ENCODE measurements at regions of chr15 and their contacts with region 1.

Region 1: GRCh38 chr15:32870240-32871033 is 152.6 kb downstream of the GREM1 start:
- DNase-seq: peak; percentile 11
- ATAC-seq: no peak
- H3K4me3 Mint-ChIP-seq: no peak overlapping the region
- H3K27ac Mint-ChIP-seq: no peak overlapping the region
- H3K4me1 Mint-ChIP-seq: no peaks in the 10 kb centered on the region
- H3K27me3 Mint-ChIP-seq: peaks cover 2% of the 10 kb centered on the region

Region 2: GRCh38 chr15:32838820-32839219 is 31.6 kb before region 1 on chr15:
- CTCF ChIA-PET with region 1: interaction called, 4 read pairs
- POLR2A ChIA-PET with region 1: interaction called, 13 read pairs
- intact Hi-C with region 1: no loop called
- DNase-seq: no peak
- ATAC-seq: no peak
- H3K4me3 Mint-ChIP-seq: no peak overlapping the region
- H3K27ac Mint-ChIP-seq: no peak overlapping the region
- H3K4me1 Mint-ChIP-seq: no peaks in the 10 kb centered on the region
- H3K27me3 Mint-ChIP-seq: peaks cover 8% of the 10 kb centered on the region

Region 3: DNA sequence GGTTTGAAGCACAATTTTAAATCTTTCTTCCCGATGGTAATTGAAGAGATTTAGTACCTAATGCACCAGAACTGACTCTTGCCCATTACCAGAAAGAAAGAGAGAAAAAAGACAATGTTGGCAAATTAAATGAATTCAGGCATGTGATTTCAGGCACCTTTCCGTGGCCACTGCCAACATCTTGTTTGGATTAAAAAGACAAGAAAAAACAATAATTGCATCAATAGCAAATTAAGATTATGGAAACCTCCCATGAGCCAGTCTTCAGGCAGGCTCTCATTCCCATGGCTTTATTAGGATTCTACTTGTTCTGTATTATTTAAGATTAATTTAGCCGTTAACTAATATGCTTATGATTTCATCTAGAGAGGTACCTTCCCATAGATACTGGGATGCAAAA is 40.4 kb after region 1 on chr15:
- CTCF ChIA-PET with region 1: no interaction called
- POLR2A ChIA-PET with region 1: no interaction called
- intact Hi-C with region 1: loop called in 1 of 2 experiments (anchors 5 kb)
- DNase-seq: no peak
- ATAC-seq: no peak
- H3K4me3 Mint-ChIP-seq: no peak overlapping the region
- H3K27ac Mint-ChIP-seq: no peak overlapping the region
- H3K4me1 Mint-ChIP-seq: no peaks in the 10 kb centered on the region
- H3K27me3 Mint-ChIP-seq: no peaks in the 10 kb centered on the region

Region 4: GRCh38 chr15:33888176-33888575 is 1017.7 kb after region 1 on chr15:
- CTCF ChIA-PET with region 1: no interaction called
- POLR2A ChIA-PET with region 1: no interaction called
- intact Hi-C with region 1: loop called in 1 of 2 experiments (anchors 10 kb)
- DNase-seq: no peak
- ATAC-seq: no peak
- H3K4me3 Mint-ChIP-seq: no peak overlapping the region
- H3K27ac Mint-ChIP-seq: no peak overlapping the region
- H3K4me1 Mint-ChIP-seq: peaks cover 2% of the 10 kb centered on the region
- H3K27me3 Mint-ChIP-seq: no peaks in the 10 kb centered on the region